CD14-positive monocyte (primary cell): ENCODE measurements at regions of chr5 and their contacts with region 1.

Region 1: DNA sequence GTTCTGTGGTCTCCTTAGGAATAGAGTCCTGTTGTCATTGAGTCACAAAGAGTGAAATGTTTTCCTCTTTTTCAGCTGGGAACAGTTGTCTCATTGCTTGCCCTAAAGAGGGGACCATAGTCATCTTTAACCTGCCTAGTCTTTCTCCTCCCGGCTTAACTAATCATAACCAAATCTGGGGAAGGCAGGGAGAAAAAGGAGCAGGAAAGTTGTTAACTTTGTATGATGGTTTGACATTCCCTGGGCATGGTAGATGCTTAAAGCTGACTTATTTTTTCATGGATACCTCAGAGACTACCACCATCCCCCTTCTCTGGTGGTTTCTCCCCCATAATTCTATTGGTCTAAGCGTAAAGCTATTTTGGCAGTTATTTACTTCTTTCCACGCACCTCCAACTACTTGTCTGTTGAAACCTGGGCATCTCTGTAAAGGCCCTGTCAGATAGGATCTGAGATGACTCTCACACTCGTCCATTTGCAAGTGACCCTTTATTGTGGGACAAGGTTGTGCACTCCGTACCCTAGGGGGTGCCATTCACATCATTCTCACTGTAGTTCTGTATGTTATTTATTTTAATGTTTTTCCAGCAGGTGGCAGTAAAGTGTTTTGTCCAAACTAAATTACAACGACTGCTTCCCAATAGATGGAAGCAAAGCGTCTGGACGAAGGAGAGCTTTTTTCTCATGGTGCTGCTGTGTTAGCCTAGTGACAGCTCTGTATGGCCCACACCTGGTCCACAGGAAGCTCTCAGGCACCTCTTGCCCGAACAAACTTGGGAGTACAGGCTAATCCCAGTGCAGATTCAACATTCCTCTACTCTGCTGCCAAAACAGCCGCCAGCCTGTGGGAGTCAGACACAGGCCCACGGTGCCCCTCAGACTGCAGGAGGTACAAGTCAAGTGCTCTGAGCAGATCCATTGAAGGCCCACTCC is 3.0 kb upstream of the FAM13B start:
- DNase-seq: peak; percentile 80 to 87 (median 86)
- H3K4me3 ChIP-seq: no peak overlapping the region
- H3K4me3 Mint-ChIP-seq: peak overlapping the region in 1 of 2 donors; percentile 0
- H3K27ac ChIP-seq: no peak overlapping the region
- H3K27ac Mint-ChIP-seq: peak overlapping the region in 2 of 7 donors; percentile 42 to 66
- H3K4me1 ChIP-seq: peaks cover 17 to 22% of the 10 kb centered on the region in 2 donors
- H3K4me1 Mint-ChIP-seq: peaks cover 25% of the 10 kb centered on the region
- H3K27me3 ChIP-seq: no peaks in the 10 kb centered on the region
- H3K27me3 Mint-ChIP-seq: peaks cover 3 to 15% (median 7%) of the 10 kb centered on the region in 3 donors
- CTCF ChIP-seq: peak; percentile 90

Region 2: DNA sequence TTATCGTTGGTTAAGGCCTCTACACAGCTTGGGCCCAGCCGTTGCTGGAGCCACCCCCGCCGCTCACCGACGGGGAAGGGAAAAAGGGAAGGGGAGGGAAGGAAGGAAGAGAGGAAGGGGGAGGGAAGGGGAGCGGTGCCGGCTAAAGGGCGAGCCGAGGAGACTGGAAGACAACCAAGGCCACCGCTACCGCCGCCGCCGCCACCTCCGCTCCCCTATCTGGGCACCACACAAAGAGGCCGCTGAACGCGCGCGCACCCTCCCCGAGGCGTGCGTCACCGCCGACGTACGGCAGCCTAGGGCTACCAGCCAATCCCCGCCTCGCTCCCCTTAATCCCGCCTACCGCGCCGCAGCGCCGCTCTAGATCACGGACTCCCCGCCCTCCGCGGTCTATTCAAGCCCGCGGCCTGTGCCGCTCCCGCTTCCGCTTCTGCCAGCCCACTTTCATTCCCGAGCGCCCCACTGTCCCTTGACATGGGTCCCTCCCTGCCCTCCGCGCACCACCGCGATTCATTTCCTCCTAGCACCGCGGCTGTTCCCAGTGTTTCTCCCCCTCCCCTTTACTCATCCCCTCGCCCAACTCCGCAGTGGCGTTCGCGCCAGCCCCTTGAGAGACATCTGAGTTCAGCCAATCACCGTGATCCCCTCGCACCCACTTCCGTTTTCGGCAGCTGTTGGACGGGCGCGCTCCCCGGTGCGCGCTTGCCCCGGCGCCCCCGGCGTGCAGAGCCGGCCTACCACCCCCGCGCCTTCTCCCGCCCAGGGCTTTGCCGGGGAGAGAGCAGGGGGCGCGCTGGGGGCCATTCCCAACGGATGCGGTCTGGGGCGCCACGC is 281.5 kb before region 1 on chr5 and contains the start of gene HNRNPA0:
- intact Hi-C with region 1: loop called in 1 of 2 experiments (anchors 5 kb)
- DNase-seq: peak; percentile 96 to 97 (median 97)
- H3K4me3 ChIP-seq: peak within 1 kb of the TSS; percentile 66 to 82 (median 82)
- H3K4me3 Mint-ChIP-seq: peak within 1 kb of the TSS; percentile 92 to 99
- H3K27ac ChIP-seq: peak within 1 kb of the TSS; percentile 93 to 100
- H3K27ac Mint-ChIP-seq: peak within 1 kb of the TSS; percentile 100
- H3K4me1 ChIP-seq: peaks cover 14 to 35% of the 10 kb centered on the region in 2 donors
- H3K4me1 Mint-ChIP-seq: peaks cover 26% of the 10 kb centered on the region
- H3K27me3 ChIP-seq: no peaks in the 10 kb centered on the region
- H3K27me3 Mint-ChIP-seq: peaks cover 0 to 2% (median 0%) of the 10 kb centered on the region in 3 donors
- CTCF ChIP-seq: no peak
- polyA plus RNA-seq, gene HNRNPA0: 8.3 to 15.5 (median 10.8) TPM

Region 3: DNA sequence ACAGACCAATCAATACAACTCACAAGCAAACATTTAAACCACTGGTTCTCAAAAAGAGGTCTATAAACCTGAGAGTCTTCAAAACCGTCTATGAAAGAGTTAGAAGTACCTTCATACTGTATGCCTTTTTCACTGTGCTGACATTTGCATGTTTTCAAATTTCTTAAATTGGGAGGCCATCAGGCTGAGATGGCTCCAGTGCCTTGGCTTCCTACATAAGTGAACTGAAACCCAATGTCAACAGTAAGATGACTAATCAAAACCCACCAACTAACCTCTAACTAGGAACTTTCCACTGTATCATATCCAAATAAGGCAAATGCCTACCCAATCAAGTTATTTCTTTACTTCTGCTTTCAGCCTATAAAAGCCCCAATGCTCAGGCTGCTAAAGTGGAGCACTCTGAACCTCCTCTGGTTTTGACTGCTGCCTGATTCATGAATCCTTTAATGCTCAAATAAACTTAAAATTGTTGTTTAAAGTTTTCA is 38.1 kb before region 1 on chr5:
- intact Hi-C with region 1: loop called in 1 of 2 experiments (anchors 5 kb)
- DNase-seq: peak; percentile 7 to 64 (median 44)
- H3K4me3 ChIP-seq: no peak overlapping the region
- H3K4me3 Mint-ChIP-seq: no peak overlapping the region
- H3K27ac ChIP-seq: peak overlapping the region in 1 of 2 donors; percentile 39
- H3K27ac Mint-ChIP-seq: peak overlapping the region; percentile 8 to 74 (median 52)
- H3K4me1 ChIP-seq: peaks cover 15 to 39% of the 10 kb centered on the region in 2 donors
- H3K4me1 Mint-ChIP-seq: peaks cover 36% of the 10 kb centered on the region
- H3K27me3 ChIP-seq: no peaks in the 10 kb centered on the region
- H3K27me3 Mint-ChIP-seq: no peaks in the 10 kb centered on the region
- CTCF ChIP-seq: no peak

Region 4: GRCh38 chr5:138065102-138065501 is 29.2 kb after region 1 on chr5:
- intact Hi-C with region 1: loop called in 1 of 2 experiments (anchors 2 kb)
- DNase-seq: no peak
- H3K4me3 ChIP-seq: no peak overlapping the region
- H3K4me3 Mint-ChIP-seq: no peak overlapping the region
- H3K27ac ChIP-seq: no peak overlapping the region
- H3K27ac Mint-ChIP-seq: no peak overlapping the region
- H3K4me1 ChIP-seq: peaks cover 10% of the 10 kb centered on the region in 2 donors
- H3K4me1 Mint-ChIP-seq: peaks cover 22% of the 10 kb centered on the region
- H3K27me3 ChIP-seq: no peaks in the 10 kb centered on the region
- H3K27me3 Mint-ChIP-seq: peaks cover 0 to 9% (median 3%) of the 10 kb centered on the region in 3 donors
- CTCF ChIP-seq: no peak

Region 5: DNA sequence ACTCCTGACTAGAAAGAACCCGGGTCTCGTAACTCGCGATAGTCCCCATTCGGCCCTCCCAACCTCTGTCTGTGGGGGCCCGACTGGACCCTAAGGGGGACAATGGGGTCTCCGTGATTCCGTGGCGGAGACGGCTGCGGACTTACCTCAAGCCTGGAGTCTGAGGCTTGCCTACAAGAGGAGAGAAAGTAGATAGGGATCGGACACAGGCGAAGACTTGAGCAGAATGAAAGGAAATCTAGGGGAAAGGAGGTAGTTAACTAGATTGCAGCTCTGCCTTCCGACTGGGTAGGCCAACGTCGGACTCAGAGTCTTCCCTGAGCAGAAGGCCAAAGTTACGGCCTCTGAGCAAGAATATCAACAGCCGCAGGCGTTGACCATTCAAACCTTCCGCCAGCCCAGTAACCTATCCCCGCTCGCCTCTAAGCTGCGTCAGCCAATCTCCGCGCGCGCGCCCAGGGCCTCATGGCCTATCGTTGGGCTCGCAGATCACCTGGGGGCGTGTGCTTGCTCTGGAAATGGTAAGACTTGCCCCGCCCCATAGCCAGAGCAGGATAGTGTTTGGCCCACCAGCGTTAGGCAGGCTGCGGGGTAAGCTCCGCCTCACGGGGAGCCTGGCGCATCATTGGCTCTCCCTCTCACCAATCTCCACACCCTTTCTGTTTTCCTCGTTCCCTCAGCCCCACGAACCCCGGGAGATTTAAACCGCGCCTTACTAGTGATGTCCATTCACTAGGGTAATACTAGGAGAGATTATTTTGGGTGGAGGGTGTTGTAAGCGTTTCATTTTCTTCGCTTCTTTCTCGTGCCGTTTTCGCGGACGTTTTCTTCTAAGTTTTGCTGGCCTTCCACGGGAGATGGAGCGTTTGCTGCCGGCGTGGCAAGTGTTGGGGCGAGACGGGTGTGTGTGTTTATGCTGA is 295.8 kb after region 1 on chr5 and contains the start of gene CDC25C:
- intact Hi-C with region 1: loop called in 1 of 2 experiments (anchors 10 kb)
- DNase-seq: peak; percentile 97 to 98 (median 97)
- H3K4me3 ChIP-seq: peak within 1 kb of the TSS; percentile 63 to 90 (median 81)
- H3K4me3 Mint-ChIP-seq: peak within 1 kb of the TSS; percentile 85 to 93
- H3K27ac ChIP-seq: peak within 1 kb of the TSS; percentile 16 to 26
- H3K27ac Mint-ChIP-seq: peak within 1 kb of the TSS; percentile 5 to 85 (median 30)
- H3K4me1 ChIP-seq: peaks cover 18 to 27% of the 10 kb centered on the region in 2 donors
- H3K4me1 Mint-ChIP-seq: peaks cover 18% of the 10 kb centered on the region
- H3K27me3 ChIP-seq: no peaks in the 10 kb centered on the region
- H3K27me3 Mint-ChIP-seq: peaks cover 0 to 2% (median 0%) of the 10 kb centered on the region in 3 donors
- CTCF ChIP-seq: no peak
- polyA plus RNA-seq, gene CDC25C: not detected